ENCODE measurements at regions of chr3 and their contacts with region 1.

Region 1: GRCh38 chr3:141561426-141562034 is 74.7 kb downstream of the RASA2 start:
- DNase-seq: no peak
- H3K4me3 ChIP-seq: no peak overlapping the region
- H3K27ac ChIP-seq: no peak overlapping the region
- H3K4me1 ChIP-seq: no peaks in the 10 kb centered on the region
- H3K27me3 ChIP-seq: no peaks in the 10 kb centered on the region
- CTCF ChIP-seq: peak; percentile 91 to 94 (median 94)

Region 2: GRCh38 chr3:141311496-141312353 is 249.8 kb before region 1 on chr3:
- intact Hi-C with region 1: loop called (anchors 2 kb)
- DNase-seq: peak; percentile 95 to 99
- H3K4me3 ChIP-seq: peak overlapping the region; percentile 59 to 89
- H3K27ac ChIP-seq: peak overlapping the region; percentile 63 to 82
- H3K4me1 ChIP-seq: peaks cover 0 to 8% of the 10 kb centered on the region in 2 donors
- H3K27me3 ChIP-seq: no peaks in the 10 kb centered on the region
- CTCF ChIP-seq: peak; percentile 72 to 85 (median 76)

Region 3: GRCh38 chr3:141460097-141460704 is 101.3 kb before region 1 on chr3:
- intact Hi-C with region 1: loop called (anchors 1 kb)
- DNase-seq: peak; percentile 51 to 94
- H3K4me3 ChIP-seq: no peak overlapping the region
- H3K27ac ChIP-seq: no peak overlapping the region
- H3K4me1 ChIP-seq: no peaks in the 10 kb centered on the region
- H3K27me3 ChIP-seq: no peaks in the 10 kb centered on the region
- CTCF ChIP-seq: peak; percentile 86 to 88 (median 88)

Region 4: GRCh38 chr3:141498598-141499223 is 62.8 kb before region 1 on chr3:
- intact Hi-C with region 1: no loop called
- DNase-seq: peak; percentile 36 to 75
- H3K4me3 ChIP-seq: no peak overlapping the region
- H3K27ac ChIP-seq: no peak overlapping the region
- H3K4me1 ChIP-seq: no peaks in the 10 kb centered on the region
- H3K27me3 ChIP-seq: no peaks in the 10 kb centered on the region
- CTCF ChIP-seq: no peak

Region 5: DNA sequence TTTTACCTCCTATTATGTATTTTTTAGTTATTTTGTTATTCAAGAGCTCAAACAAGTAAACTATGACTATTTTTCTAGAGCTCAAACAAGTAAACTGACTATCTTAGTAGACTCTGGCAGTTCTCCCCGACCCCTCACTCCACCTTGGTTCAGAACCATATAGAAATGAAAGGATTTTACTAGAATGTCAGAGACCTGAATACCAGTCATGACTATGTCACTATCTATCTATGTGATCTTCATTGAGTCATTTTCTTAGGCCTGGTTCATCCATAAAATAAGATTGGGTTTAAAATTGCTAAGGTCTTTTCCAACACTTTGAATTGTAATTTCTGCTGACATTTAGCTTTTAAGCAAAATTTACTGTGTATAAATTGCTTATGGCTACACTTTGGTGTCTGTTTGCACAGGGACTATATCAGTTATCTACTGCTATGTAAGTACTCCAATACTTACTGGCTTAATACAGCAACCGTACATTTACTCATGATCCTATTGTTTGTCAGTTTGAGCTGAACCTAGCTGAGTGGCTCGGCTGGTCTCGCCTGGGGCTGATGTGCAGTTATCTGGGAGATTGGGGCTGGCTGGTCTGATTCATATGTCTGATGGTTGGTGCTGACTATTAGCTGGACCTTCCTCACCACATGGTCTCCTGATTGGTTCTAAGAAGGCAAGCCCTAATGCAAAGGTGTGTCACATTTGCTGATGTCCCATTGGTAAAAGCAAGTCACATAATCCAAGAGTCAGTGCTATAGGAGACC is 37.7 kb before region 1 on chr3:
- intact Hi-C with region 1: no loop called
- DNase-seq: no peak
- H3K4me3 ChIP-seq: no peak overlapping the region
- H3K27ac ChIP-seq: no peak overlapping the region
- H3K4me1 ChIP-seq: no peaks in the 10 kb centered on the region
- H3K27me3 ChIP-seq: no peaks in the 10 kb centered on the region
- CTCF ChIP-seq: no peak

Region 6: DNA sequence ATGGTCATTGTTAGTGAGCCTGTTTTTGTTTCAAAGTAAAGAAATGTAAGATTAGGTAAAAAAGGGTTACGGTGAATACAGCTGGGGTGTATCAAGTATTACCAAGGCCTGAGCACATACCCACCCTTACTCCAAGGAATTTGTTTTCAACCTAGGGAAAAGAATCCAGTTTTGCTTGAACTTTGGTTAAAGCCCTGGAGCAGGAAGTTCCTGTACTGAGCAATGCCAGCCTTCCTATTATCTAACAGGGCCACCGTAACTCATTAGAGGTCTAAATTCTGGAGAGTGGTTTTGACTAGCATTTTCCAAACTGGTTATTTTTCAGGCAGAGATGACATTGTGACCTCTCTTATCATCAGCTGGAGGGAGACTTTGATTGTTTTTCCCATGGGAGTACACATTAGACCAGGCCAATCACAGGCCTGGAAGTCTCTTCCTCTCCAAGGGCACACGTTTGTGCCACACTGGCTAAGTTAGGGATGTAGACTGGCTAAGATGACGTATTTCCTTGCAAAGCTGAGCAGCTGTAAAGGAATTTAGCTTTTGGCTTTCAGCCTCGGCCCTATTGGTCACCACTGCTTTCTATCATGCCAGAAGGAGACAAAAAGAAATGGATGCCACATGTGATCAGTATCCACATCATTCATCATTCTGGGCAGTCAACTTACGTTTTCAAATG is 149.2 kb after region 1 on chr3:
- intact Hi-C with region 1: no loop called
- DNase-seq: peak; percentile 30 to 83
- H3K4me3 ChIP-seq: no peak overlapping the region
- H3K27ac ChIP-seq: peak overlapping the region; percentile 82 to 89
- H3K4me1 ChIP-seq: peaks cover 8 to 19% of the 10 kb centered on the region in 2 donors
- H3K27me3 ChIP-seq: no peaks in the 10 kb centered on the region
- CTCF ChIP-seq: no peak

Region 7: DNA sequence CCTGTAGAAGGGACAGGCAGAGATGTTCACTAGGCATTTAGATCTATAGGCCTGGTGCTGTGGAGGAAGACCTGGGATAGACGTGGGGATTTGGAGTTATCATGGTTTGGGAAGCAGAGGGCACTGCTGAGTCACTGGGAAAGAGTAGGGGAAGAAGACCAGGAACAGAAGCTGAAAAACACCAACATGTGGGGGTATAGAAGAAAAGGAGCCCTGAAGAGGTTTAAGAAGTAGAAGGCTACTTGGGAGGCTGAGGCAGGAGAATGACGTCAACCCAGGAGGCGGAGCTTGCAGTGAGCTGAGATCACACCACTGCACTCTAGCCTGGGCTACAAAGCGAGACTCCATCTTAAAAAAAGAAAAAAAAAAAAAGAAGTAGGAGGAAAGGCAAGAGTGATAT is 220.9 kb after region 1 on chr3:
- intact Hi-C with region 1: no loop called
- DNase-seq: no peak
- H3K4me3 ChIP-seq: no peak overlapping the region
- H3K27ac ChIP-seq: no peak overlapping the region
- H3K4me1 ChIP-seq: no peaks in the 10 kb centered on the region
- H3K27me3 ChIP-seq: no peaks in the 10 kb centered on the region
- CTCF ChIP-seq: no peak